ENCODE measurements at regions of chr12 and their contacts with region 1.

Region 1: DNA sequence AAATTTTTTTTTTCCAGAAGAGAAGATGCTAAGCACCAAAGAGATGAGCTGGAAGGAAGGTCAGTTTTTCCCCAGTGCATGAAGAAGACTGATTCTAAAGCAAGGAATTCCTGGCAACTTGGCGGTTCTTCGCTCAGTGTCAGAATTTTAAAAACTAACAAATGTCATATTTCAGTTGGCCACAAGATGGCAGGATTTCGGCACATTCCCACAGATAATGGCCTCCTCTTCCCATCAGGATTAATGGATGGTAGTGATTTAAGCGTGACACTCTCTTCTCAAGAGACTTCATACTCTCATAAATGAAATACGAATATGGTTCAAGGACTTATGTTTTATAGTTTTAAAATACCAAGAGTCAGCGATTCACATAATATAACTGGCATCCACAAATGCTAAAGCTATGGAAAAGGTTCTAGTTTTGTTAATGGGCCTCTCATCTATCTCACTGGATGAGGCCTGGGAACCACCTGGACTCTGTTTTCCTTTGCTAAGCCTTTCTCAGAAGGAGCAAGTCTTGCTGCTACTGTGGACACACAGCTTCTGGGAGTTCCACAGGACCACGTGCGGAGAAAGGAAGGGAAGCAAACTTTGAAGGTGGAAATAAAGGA is 46.1 kb upstream of the PTPRO start:
- DNase-seq: peak; percentile 78
- H3K4me3 Mint-ChIP-seq: peak overlapping the region; percentile 25
- H3K27ac Mint-ChIP-seq: peak overlapping the region; percentile 95
- H3K4me1 Mint-ChIP-seq: peaks cover 55% of the 10 kb centered on the region
- H3K27me3 Mint-ChIP-seq: no peaks in the 10 kb centered on the region
- CTCF ChIP-seq: peak; percentile 61

Region 2: DNA sequence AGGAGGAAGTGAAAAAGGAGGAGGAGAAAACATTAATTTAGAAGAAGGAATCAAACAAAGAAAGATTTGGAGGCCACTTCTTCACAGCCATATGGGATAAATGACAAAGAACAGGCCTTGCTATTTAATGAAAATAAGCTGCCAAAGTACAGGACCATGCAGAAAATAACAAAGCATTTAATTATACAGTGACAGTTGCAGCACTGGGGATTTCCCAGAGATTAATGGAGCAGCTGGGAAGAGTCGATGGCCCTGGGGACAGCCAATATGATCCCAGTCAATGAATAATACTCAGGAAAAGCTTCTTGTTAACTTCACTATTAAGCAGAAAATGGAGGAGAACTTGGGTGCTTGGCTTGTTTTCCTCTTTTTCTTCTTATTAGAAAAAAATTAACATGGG is 89.6 kb before region 1 on chr12:
- CTCF ChIA-PET with region 1: no interaction called
- POLR2A ChIA-PET with region 1: no interaction called
- intact Hi-C with region 1: no loop called
- DNase-seq: no peak
- H3K4me3 Mint-ChIP-seq: no peak overlapping the region
- H3K27ac Mint-ChIP-seq: no peak overlapping the region
- H3K4me1 Mint-ChIP-seq: peaks cover 9% of the 10 kb centered on the region
- H3K27me3 Mint-ChIP-seq: no peaks in the 10 kb centered on the region
- CTCF ChIP-seq: no peak

Region 3: GRCh38 chr12:15322164-15323061 is 46.2 kb after region 1 on chr12 and contains the start of gene PTPRO:
- CTCF ChIA-PET with region 1: interaction called, 5 read pairs
- POLR2A ChIA-PET with region 1: interaction called, 3 read pairs
- intact Hi-C with region 1: loop called (anchors 2 kb)
- DNase-seq: peak; percentile 49
- H3K4me3 Mint-ChIP-seq: peak within 1 kb of the TSS; percentile 78
- H3K27ac Mint-ChIP-seq: peak within 1 kb of the TSS; percentile 35
- H3K4me1 Mint-ChIP-seq: peaks cover 13% of the 10 kb centered on the region
- H3K27me3 Mint-ChIP-seq: no peaks in the 10 kb centered on the region
- CTCF ChIP-seq: no peak
- total RNA-seq, gene PTPRO: 0.74 and 2.2 TPM in 2 replicates

Region 4: DNA sequence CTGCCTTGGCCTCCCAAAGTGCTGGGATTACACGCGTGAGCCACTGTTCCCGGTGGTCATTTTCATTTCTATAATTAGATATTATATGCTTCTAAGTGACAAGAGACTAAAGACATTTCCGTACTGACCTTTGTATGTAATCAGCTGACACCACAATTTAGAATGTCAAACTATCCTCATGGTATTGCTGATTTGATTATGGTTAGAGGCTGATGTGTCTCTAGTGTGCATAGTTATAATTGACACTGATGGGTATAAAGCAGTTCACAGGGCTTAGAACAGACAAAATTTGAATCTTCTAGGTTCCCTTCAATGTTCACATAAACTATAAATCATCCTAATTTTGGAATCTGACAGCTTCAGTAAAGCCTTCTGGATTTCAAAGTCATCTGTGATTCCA is 238.8 kb after region 1 on chr12:
- CTCF ChIA-PET with region 1: interaction called, 48 read pairs
- POLR2A ChIA-PET with region 1: no interaction called
- intact Hi-C with region 1: no loop called
- DNase-seq: no peak
- H3K4me3 Mint-ChIP-seq: no peak overlapping the region
- H3K27ac Mint-ChIP-seq: no peak overlapping the region
- H3K4me1 Mint-ChIP-seq: no peaks in the 10 kb centered on the region
- H3K27me3 Mint-ChIP-seq: no peaks in the 10 kb centered on the region
- CTCF ChIP-seq: no peak

Region 5: GRCh38 chr12:15532364-15532977 is 256.3 kb after region 1 on chr12:
- CTCF ChIA-PET with region 1: interaction called, 21 read pairs
- POLR2A ChIA-PET with region 1: interaction called, 6 read pairs
- intact Hi-C with region 1: no loop called
- DNase-seq: peak; percentile 89
- H3K4me3 Mint-ChIP-seq: no peak overlapping the region
- H3K27ac Mint-ChIP-seq: peak overlapping the region; percentile 57
- H3K4me1 Mint-ChIP-seq: peaks cover 29% of the 10 kb centered on the region
- H3K27me3 Mint-ChIP-seq: no peaks in the 10 kb centered on the region
- CTCF ChIP-seq: peak; percentile 71

Region 6: GRCh38 chr12:15856097-15856982 is 580.1 kb after region 1 on chr12:
- CTCF ChIA-PET with region 1: interaction called, 6 read pairs
- POLR2A ChIA-PET with region 1: interaction called, 3 read pairs
- intact Hi-C with region 1: loop called (anchors 2 kb)
- DNase-seq: peak; percentile 76
- H3K4me3 Mint-ChIP-seq: no peak overlapping the region
- H3K27ac Mint-ChIP-seq: peak overlapping the region; percentile 75
- H3K4me1 Mint-ChIP-seq: peaks cover 26% of the 10 kb centered on the region
- H3K27me3 Mint-ChIP-seq: no peaks in the 10 kb centered on the region
- CTCF ChIP-seq: peak; percentile 82

Region 7: GRCh38 chr12:15928346-15928745 is 652.2 kb after region 1 on chr12:
- CTCF ChIA-PET with region 1: no interaction called
- POLR2A ChIA-PET with region 1: no interaction called
- intact Hi-C with region 1: no loop called
- DNase-seq: peak; percentile 55
- H3K4me3 Mint-ChIP-seq: no peak overlapping the region
- H3K27ac Mint-ChIP-seq: no peak overlapping the region
- H3K4me1 Mint-ChIP-seq: peaks cover 15% of the 10 kb centered on the region
- H3K27me3 Mint-ChIP-seq: no peaks in the 10 kb centered on the region
- CTCF ChIP-seq: no peak

Measured in MCF 10A (cell line).